Calu3 (cell line): ENCODE measurements at regions of chr6 and their contacts with region 1.

Region 1: DNA sequence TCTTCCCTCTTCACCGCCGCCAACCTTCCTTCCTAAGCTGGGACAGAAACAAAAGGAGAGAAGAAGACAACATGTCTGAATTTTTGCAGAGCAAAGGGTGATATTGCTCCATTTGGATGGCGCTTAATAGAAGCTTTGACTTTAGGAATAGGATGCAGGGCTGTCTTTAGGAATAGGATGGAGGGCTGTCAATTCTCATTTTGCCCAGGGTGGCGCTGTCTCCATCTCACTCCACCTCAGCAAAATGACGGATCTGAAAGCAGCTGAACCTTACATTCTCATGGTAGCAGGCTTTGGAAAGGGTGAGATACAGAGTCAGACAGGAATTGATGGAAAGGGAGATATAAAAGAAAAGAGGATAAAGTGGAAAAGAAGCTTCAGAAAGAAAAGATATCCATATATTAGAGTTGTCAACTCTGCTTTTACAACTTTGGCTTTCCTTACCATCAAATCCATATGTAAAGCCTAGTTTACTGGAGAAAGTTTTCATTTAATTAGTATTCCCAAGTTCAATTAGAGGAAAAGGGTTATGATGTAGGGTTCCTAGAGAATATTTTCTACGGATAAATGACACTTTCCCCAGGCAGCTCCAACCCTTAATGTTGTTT is 2.4 kb downstream of the MTCL3 start:
- DNase-seq: peak; percentile 41
- H3K4me3 Mint-ChIP-seq: peak overlapping the region; percentile 75
- H3K27ac Mint-ChIP-seq: no peak overlapping the region
- H3K4me1 Mint-ChIP-seq: no peaks in the 10 kb centered on the region
- H3K27me3 Mint-ChIP-seq: peaks cover 22% of the 10 kb centered on the region
- CTCF ChIP-seq: peak; percentile 65

Region 2: DNA sequence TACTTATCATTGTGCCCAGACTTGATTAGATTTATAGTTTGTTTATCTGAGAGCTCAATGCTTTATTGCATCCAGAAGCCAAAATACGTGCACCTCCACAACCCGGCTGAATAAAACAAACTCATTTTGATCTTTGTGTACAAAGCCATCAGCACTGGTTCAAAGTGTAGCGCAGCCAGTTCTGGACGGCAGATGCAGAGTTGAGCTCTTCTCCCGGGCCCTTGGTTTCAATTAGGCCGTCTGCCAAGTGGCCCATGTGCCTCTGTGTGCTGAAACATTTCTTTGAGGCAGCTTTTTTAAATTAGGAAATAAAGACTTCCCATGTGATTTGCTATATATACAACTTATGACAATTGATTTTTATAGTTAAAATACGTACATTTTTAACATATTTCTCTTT is 494.5 kb before region 1 on chr6:
- CTCF ChIA-PET with region 1: no interaction called
- intact Hi-C with region 1: no loop called
- DNase-seq: no peak
- H3K4me3 Mint-ChIP-seq: no peak overlapping the region
- H3K27ac Mint-ChIP-seq: no peak overlapping the region
- H3K4me1 Mint-ChIP-seq: peaks cover 25% of the 10 kb centered on the region
- H3K27me3 Mint-ChIP-seq: no peaks in the 10 kb centered on the region
- CTCF ChIP-seq: no peak

Region 3: GRCh38 chr6:127464881-127465459 is 51.8 kb before region 1 on chr6:
- CTCF ChIA-PET with region 1: interaction called, 10 read pairs
- intact Hi-C with region 1: no loop called
- DNase-seq: peak; percentile 71
- H3K4me3 Mint-ChIP-seq: no peak overlapping the region
- H3K27ac Mint-ChIP-seq: no peak overlapping the region
- H3K4me1 Mint-ChIP-seq: no peaks in the 10 kb centered on the region
- H3K27me3 Mint-ChIP-seq: no peaks in the 10 kb centered on the region
- CTCF ChIP-seq: peak; percentile 65

Region 4: GRCh38 chr6:127484212-127484858 is 32.4 kb before region 1 on chr6:
- CTCF ChIA-PET with region 1: interaction called, 7 read pairs
- intact Hi-C with region 1: loop called (anchors 5 kb)
- DNase-seq: no peak
- H3K4me3 Mint-ChIP-seq: peak overlapping the region; percentile 47
- H3K27ac Mint-ChIP-seq: peak overlapping the region; percentile 77
- H3K4me1 Mint-ChIP-seq: peaks cover 62% of the 10 kb centered on the region
- H3K27me3 Mint-ChIP-seq: no peaks in the 10 kb centered on the region
- CTCF ChIP-seq: no peak

Region 5: DNA sequence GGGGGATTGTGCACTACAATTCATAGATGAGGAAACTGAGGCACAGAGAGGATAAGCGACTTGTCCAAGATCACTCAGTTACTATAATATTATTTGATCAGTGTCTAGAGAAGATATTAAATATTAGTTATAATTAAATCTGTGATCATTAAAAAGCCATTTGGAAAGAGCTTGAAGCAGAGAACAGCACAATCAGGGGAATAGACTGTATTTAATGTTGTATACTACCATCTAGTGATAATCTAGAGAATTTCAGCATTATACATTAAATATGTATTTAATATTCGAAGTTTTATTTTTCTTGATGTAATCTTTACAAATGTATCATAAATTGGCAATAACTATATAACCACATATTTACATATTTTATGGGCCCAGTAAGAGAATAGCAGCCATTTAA is 22.5 kb after region 1 on chr6:
- CTCF ChIA-PET with region 1: interaction called, 10 read pairs
- intact Hi-C with region 1: no loop called
- DNase-seq: no peak
- H3K4me3 Mint-ChIP-seq: no peak overlapping the region
- H3K27ac Mint-ChIP-seq: no peak overlapping the region
- H3K4me1 Mint-ChIP-seq: no peaks in the 10 kb centered on the region
- H3K27me3 Mint-ChIP-seq: no peaks in the 10 kb centered on the region
- CTCF ChIP-seq: no peak